ENCODE measurements at regions of chr4 and their contacts with region 1.

Region 1: GRCh38 chr4:132502096-132502552 is 647.0 kb upstream of the PCDH10 start:
- DNase-seq: peak; percentile 6
- H3K4me3 Mint-ChIP-seq: no peak overlapping the region
- H3K27ac Mint-ChIP-seq: no peak overlapping the region
- H3K4me1 Mint-ChIP-seq: no peaks in the 10 kb centered on the region
- H3K27me3 Mint-ChIP-seq: no peaks in the 10 kb centered on the region
- CTCF ChIP-seq: no peak

Region 2: DNA sequence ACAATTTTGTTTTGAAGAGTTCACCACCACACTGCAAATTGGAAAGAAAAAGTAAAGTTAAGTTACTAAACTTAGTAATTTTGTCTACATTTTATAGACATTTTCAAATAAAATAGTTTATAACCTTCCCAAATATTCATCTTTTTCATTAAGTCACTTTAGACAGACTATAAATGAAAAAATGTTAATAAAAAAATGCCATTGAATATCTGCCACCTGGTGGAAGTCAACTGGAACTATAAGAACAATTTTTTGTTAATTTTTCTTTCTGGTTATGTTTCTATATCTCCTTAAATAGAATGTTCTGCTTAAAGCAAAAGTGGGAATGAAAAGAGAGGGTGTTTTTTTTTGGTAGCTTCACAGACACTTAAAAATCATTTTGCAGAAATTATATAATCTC is 112.6 kb after region 1 on chr4:
- CTCF ChIA-PET with region 1: no interaction called
- POLR2A ChIA-PET with region 1: no interaction called
- intact Hi-C with region 1: loop called (anchors 10 kb)
- DNase-seq: peak; percentile 9
- H3K4me3 Mint-ChIP-seq: no peak overlapping the region
- H3K27ac Mint-ChIP-seq: no peak overlapping the region
- H3K4me1 Mint-ChIP-seq: no peaks in the 10 kb centered on the region
- H3K27me3 Mint-ChIP-seq: no peaks in the 10 kb centered on the region
- CTCF ChIP-seq: peak; percentile 43